K562 (cell line): ENCODE measurements at regions of chr11 and their contacts with region 1.

Region 1: DNA sequence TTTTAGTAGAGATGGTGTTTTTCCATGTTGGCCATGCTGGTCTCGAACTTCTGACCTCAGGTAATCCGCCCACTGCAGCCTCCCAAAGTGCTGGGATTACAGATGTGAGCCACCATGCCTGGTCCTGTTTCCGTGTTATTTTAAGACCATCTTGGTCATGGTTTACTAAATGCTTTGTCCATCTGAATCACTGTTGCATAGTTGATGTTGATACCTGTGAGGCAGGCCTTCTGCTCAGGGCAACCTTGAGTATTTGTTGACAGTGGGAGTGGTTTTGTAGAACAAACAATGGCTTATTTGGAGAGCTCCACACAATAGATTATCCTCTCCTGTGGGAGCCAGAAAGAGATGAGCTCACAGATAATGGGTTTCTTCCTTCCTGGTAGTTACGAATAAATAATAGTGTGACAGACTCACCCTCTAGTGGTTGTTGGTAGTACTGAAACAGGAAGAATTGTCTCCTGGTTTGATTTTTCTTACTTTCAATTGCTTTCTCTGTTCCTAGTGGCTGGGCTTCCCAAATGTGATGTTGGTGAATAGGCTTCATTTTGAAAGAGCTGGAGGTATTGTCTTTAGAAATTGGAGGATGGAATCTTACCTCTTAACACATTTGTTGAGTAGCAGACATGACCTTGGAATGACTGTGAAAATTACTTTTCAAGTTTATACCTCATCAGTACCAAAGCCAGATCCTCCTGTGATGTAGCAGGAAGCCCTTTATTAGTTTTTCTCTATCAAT is 39.0 kb downstream of the CTNND1 start:
- DNase-seq: peak; percentile 70 to 73 (median 71)
- ATAC-seq: peak; percentile 86
- H3K4me3 ChIP-seq: no peak overlapping the region
- H3K27ac ChIP-seq: no peak overlapping the region; the same call in 2 of the 3 replicates
- H3K4me1 ChIP-seq: peaks cover 0 to 19% of the 10 kb centered on the region in 2 experiments; a peak in 3 of 5 replicates
- H3K27me3 ChIP-seq: no peaks in the 10 kb centered on the region
- CTCF ChIP-seq: peak; percentile 63 to 94 (median 82); a peak in 5 of 6 replicates
- EP300 ChIP-seq: peak; percentile 28; the same call in 1 of the 2 replicates
- POLR2A ChIP-seq: no peak
- RAD21 ChIP-seq: peak; percentile 93 to 96

Region 2: DNA sequence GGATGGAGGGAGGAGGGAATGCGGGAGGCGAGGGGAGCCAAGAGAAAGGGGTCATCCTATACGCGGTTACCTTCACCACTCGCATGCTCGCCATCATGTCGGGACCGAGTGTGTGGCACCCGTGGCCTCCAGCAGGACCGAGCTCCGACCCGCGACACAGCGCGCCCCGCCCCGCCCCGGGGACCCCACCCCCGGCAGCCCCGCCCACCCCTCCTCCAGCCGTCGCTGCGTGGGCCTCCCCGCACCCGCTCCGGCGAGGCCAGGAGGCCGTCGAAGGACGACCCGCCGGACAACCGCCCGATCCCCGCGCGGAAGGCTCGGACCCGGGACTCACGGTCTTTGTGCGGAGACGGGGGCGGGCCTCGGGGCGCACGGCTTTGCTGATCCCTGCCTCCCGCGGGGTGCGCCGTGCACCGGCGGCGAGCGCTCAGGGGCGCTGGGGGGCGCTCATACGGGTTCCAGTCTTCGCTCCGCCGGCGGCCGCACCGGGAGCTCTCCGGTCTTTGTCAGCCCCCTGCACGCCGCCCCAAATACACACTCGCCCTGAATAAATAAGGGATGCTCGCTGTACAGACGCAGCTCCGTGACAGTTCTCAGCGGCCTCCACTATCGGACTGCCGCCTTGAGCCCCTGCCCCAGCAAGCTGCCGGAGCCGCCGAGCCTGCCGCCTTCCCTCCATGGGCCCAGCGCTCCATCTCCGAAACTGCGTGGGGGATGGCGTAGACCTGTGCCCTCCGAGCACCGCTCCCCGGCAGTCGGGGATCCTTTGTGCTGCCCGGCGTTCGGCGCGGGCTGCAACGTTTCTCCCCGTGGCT is 232.9 kb before region 1 on chr11 and contains the start of gene UBE2L6:
- CTCF ChIA-PET with region 1: interaction called, 5 read pairs
- POLR2A ChIA-PET with region 1: no interaction called
- in situ Hi-C with region 1: no loop called
- intact Hi-C with region 1: loop called (anchors 10 kb)
- DNase-seq: peak; percentile 69 to 85 (median 82)
- ATAC-seq: peak; percentile 91
- H3K4me3 ChIP-seq: peak within 1 kb of the TSS; percentile 78
- H3K27ac ChIP-seq: peak within 1 kb of the TSS; percentile 60; the same call in 2 of the 3 replicates
- H3K4me1 ChIP-seq: peaks cover 12 to 19% of the 10 kb centered on the region in 2 experiments; a peak in 4 of 5 replicates
- H3K27me3 ChIP-seq: no peaks in the 10 kb centered on the region
- CTCF ChIP-seq: peak in 2 of 3 experiments; percentile 45 to 59; a peak in 4 of 6 replicates
- EP300 ChIP-seq: no peak
- POLR2A ChIP-seq: no peak
- RAD21 ChIP-seq: peak in 1 of 2 experiments; percentile 81; a peak in 2 of 4 replicates
- polyA plus RNA-seq, gene UBE2L6: 21.5 to 24.9 TPM

Region 3: DNA sequence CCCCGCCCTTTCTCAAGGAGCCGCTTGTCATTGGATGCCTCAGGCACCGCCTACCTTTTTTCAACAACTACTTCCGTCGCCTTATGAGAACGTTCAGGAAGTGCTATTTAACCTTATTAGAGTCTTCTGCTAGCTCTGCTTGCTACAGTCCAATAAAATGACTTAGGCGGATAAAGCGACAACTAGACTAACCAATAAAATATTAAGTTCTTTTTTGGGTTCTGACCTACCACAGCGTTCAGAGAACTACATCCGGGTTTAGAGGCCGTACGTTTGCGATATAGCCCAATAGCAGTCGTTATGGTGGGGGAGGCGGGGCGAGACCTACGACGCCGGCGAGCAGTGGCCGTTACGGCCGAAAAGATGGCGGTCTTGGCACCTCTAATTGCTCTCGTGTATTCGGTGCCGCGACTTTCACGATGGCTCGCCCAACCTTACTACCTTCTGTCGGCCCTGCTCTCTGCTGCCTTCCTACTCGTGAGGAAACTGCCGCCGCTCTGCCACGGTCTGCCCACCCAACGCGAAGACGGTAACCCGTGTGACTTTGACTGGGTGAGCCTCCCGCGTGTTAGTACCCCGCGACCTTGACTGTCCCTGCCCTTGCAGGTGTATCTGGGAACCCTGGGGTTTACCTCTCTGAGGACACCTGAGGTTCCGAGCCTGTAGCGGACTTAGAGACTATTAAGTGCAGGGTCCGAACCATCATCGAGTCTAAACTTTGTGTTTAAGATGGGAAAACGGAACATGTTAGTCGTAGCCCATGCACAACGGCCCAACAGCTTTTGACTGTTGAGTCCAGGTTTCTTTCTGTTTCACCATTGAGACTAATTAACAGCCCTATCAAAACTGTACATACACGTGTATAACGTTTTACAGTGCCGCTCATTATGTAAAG is 88.1 kb before region 1 on chr11 and contains the start of gene TMX2:
- CTCF ChIA-PET with region 1: no interaction called
- POLR2A ChIA-PET with region 1: no interaction called
- in situ Hi-C with region 1: no loop called
- intact Hi-C with region 1: loop called (anchors 2 kb)
- DNase-seq: peak; percentile 68 to 97 (median 81)
- ATAC-seq: peak; percentile 95
- H3K4me3 ChIP-seq: peak within 1 kb of the TSS; percentile 95
- H3K27ac ChIP-seq: peak within 1 kb of the TSS; percentile 99
- H3K4me1 ChIP-seq: peaks cover 9% of the 10 kb centered on the region in 2 experiments; a peak in 3 of 5 replicates
- H3K27me3 ChIP-seq: no peaks in the 10 kb centered on the region
- CTCF ChIP-seq: no peak
- EP300 ChIP-seq: no peak
- POLR2A ChIP-seq: peak; percentile 95
- RAD21 ChIP-seq: 0 out of 4 replicates have a peak, but pooled peaks of 1 of the 2 experiments have one; percentile 11
- polyA plus RNA-seq, gene TMX2: 381 to 433 TPM

Region 4: DNA sequence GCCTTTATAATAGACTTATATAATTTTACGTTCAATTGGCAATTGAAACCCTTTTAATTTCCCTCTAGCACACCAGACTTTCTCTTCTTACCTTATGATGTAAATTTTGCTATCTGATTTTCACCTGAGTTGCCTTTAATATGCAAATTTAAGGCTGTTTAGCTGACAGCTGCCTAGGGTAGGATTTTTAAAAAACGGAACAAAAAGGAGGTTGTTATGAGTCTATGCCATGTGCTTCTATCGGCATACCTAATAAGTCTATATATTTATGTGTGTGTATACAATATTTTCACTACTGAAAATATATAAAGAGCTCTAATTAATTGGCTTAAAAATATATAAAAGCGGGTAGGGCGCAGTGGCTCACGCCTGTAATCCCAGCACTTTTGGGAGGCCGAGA is 71.1 kb before region 1 on chr11:
- CTCF ChIA-PET with region 1: no interaction called
- POLR2A ChIA-PET with region 1: no interaction called
- in situ Hi-C with region 1: no loop called
- intact Hi-C with region 1: no loop called
- DNase-seq: no peak
- ATAC-seq: no peak
- H3K4me3 ChIP-seq: no peak overlapping the region
- H3K27ac ChIP-seq: peak overlapping the region; percentile 8; the same call in 1 of the 3 replicates
- H3K4me1 ChIP-seq: peaks cover 3 to 4% of the 10 kb centered on the region in 2 experiments; a peak in 4 of 5 replicates
- H3K27me3 ChIP-seq: no peaks in the 10 kb centered on the region
- CTCF ChIP-seq: no peak
- EP300 ChIP-seq: no peak
- POLR2A ChIP-seq: no peak
- RAD21 ChIP-seq: no peak

Region 5: GRCh38 chr11:57751676-57752253 is 48.8 kb before region 1 on chr11 and contains the start of gene BTBD18:
- CTCF ChIA-PET with region 1: interaction called, 5 read pairs
- POLR2A ChIA-PET with region 1: interaction called, 3 read pairs
- in situ Hi-C with region 1: no loop called
- intact Hi-C with region 1: loop called (anchors 1 kb)
- DNase-seq: peak in 3 of 4 experiments; percentile 38 to 56 (median 44)
- ATAC-seq: peak; percentile 94
- H3K4me3 ChIP-seq: no peak within 1 kb of the TSS
- H3K27ac ChIP-seq: peak within 1 kb of the TSS; percentile 6; the same call in 1 of the 3 replicates
- H3K4me1 ChIP-seq: peaks cover 0 to 11% of the 10 kb centered on the region in 2 experiments; a peak in 2 of 5 replicates
- H3K27me3 ChIP-seq: no peaks in the 10 kb centered on the region
- CTCF ChIP-seq: peak; percentile 45 to 70 (median 52); a peak in 5 of 6 replicates
- EP300 ChIP-seq: no peak
- POLR2A ChIP-seq: no peak
- RAD21 ChIP-seq: peak; percentile 54 to 67
- polyA plus RNA-seq, gene BTBD18: 0.06 TPM in 1 of 2 experiments, not detected in the other

Region 6: DNA sequence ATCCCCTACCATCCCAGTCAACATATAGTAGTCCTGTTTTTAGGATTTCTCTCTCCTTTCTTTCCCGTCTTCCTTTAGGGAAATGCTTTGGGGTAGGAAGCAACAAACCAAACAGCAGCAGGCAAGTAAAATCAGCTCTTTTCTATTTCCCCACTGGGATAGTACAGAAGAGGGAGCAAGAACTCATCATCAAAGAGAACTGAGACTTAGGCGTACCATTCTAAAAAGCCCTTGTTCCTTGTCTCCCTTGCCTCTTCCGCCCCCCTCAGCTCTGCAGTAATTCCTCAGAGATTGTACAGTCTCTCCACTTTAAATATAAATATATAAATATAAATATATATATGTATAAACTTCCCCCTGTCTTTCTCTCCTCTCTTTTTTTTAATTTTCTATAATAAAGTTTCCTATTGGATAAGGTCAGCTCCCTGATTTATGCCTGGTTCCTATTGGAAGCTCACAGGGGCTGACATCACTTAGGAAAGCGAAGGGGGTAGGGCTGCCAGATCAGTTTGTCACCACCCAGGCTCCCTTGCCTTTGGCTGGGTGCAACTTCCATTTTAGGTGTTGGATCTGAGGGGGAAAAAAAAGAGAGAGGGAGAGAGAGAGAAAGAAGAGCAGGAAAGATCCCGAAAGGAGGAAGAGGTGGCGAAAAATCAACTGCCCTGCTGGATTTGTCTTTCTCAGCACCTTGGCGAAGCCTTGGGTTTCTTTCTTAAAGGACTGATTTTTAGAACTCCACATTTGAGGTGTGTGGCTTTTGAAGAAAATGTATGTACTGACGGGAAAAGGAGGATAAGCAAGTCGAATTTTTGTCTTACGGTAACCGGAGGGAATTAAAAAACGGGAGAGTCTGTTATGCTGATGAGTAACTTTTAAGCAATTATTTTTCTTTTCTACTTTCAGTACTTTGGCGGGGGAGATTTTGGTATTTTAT is 39.0 kb before region 1 on chr11 and contains the start of gene CTNND1:
- CTCF ChIA-PET with region 1: interaction called, 6 read pairs
- POLR2A ChIA-PET with region 1: interaction called, 3 read pairs
- in situ Hi-C with region 1: no loop called
- intact Hi-C with region 1: loop called (anchors 5 kb)
- DNase-seq: peak; percentile 66 to 99 (median 81)
- ATAC-seq: peak; percentile 93
- H3K4me3 ChIP-seq: peak within 1 kb of the TSS; percentile 62
- H3K27ac ChIP-seq: peak within 1 kb of the TSS; percentile 95
- H3K4me1 ChIP-seq: peaks cover 7 to 22% of the 10 kb centered on the region in 2 experiments; a peak in 4 of 5 replicates
- H3K27me3 ChIP-seq: no peaks in the 10 kb centered on the region
- CTCF ChIP-seq: no peak
- EP300 ChIP-seq: peak; percentile 67
- POLR2A ChIP-seq: peak; percentile 94
- RAD21 ChIP-seq: no peak
- polyA plus RNA-seq, gene CTNND1: 11.1 to 23.8 TPM

Region 7: DNA sequence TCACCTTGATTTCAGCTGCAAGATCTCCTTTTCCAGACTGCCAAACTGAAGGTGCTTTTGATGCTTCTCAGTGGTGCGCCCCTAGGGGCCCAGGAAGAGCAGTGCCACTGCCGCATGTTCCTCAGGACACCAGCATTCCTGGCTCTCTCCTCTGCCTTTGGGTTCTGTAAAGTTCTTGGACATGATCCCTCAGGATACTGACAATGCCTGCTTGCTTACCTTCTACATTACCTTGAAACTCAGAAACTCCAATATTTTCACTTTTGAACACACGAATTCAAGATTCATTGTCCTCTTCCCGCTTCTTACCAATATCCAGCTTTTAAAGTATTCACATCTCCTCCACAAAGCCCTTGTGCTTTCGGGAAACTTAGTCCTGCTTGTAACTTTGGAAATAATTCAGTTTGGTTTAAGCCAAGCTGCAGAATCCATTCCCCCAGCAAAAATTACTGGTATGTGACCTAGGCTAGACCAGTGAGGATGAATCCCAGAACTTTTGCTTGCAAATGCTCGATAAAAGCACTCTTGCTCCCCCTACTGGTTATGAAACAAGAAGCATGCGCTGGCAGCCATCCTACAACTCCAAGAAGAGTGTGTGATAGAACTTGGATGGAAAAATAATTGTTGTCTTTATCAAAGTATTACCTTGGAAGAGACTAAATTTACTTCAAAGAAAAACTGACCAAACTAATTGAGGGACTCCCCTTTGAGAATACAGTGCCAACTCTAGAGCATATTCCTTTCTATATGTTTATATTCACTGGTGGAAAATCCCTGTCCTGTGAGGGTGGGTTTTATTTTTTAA is 723.8 kb after region 1 on chr11:
- CTCF ChIA-PET with region 1: no interaction called
- POLR2A ChIA-PET with region 1: no interaction called
- in situ Hi-C with region 1: loop called (anchors 25 kb)
- intact Hi-C with region 1: no loop called
- DNase-seq: peak; percentile 67 to 84 (median 72)
- ATAC-seq: peak; percentile 99
- H3K4me3 ChIP-seq: no peak overlapping the region
- H3K27ac ChIP-seq: no peak overlapping the region
- H3K4me1 ChIP-seq: 0 out of 5 replicates have a peak, but pooled peaks cover 0 to 2% of the 10 kb centered on the region in 2 experiments
- H3K27me3 ChIP-seq: peaks cover 3 to 5% of the 10 kb centered on the region in 2 experiments; a peak in 3 of 5 replicates
- CTCF ChIP-seq: peak; percentile 77 to 85 (median 85)
- EP300 ChIP-seq: no peak
- POLR2A ChIP-seq: no peak
- RAD21 ChIP-seq: peak; percentile 21 to 66; a peak in 3 of 4 replicates